Posterior vena cava (tissue), 2 donors: ENCODE measurements at regions of chr12 and their contacts with region 1.

Region 1: GRCh38 chr12:131084341-131085011 is 130.8 kb downstream of the ADGRD1 start:
- DNase-seq: peak; percentile 76

Region 2: GRCh38 chr12:130839770-130840404 is 244.6 kb before region 1 on chr12:
- intact Hi-C with region 1: loop called in 1 of 2 experiments (anchors 5 kb)
- DNase-seq: no peak

Region 3: DNA sequence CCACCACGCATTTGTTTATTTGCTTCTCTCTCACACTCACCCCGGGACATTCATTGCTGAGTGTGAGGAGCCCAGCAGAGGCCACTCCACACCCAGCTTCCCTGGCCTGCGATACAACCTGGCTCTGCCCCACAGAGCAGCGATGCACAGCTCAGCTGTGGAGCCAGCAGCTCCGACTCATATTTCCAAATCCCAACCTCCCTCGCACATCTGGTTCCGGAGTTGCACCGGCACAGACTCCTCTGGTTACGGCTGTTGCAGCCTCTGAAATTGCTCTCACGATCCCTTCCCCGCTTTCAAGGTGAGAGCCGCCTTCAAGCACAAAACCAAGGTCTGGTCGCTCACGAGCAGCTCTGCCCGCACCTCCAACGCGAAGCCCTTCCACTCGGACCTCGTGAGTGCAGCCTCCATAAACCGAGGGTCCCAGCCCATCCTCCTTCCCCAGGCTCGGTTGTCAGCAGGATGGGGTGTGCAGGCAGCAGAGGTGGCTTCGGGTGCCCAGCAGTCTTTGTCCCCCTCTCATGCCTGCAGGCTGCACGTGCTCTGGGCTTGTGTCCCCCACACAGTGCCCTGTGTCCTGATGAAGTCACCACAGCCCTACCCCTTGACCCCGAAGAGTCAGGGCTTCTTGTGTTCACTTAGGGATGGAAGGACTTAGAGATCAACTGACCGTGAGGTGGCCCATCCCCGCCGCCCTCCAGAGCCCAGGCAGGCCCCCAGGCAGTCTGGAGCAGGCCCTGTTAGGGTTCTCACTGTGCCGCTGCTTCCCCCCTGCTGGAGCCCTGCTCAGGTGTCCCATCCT is 53.6 kb after region 1 on chr12:
- intact Hi-C with region 1: no loop called
- DNase-seq: no peak